ENCODE measurements at regions of chr7 and their contacts with region 1.

Region 1: DNA sequence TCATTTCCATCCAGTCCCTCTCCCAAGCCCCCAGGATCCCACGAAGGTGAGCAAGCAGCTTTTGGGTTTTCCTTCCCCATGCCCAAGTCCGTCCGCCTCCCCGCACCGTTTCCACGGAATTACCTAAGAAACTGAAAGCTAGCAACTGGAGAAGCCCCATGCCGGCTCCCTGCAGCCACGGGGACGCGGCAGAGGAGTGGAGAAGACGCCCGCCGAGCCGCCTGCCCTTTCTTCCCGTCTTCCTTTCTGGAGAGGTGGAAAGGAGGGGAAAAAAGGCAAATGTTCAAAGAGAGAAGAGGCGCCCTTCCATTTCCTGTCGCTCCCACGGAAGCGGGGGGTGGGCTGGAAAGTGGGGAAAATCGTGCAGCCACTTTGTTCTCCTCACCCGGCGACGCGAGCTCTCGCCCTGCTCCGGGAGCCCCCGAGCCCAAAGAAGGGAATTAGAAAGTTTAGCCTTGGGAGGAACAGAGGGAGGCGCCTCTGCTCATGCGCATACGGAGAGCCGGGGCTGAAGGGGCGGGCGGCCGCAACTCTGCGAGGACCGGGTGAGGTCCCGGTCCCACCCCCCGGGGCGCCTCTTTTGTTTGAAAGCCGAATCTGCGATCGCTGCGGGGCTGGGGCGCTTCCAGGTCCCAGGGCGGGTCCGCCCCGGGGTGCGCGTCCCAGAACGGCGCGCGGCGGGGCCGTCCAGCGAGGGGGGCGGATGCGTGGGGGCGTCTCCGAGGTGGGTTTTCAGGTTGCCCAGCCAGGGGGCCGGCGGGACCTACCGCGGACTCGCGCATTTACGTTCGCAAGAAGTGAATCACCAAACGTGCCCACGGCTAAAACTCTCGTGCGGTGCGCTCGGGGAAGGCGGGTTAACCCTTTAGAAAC is at the start of gene LAMB1:
- DNase-seq: peak; percentile 73
- ATAC-seq: peak; percentile 76
- H3K4me3 ChIP-seq: peak within 1 kb of the TSS; percentile 75 to 93 (median 85)
- H3K27ac ChIP-seq: peak within 1 kb of the TSS; percentile 68
- H3K4me1 ChIP-seq: peaks cover 87% of the 10 kb centered on the region
- H3K27me3 ChIP-seq: no peaks in the 10 kb centered on the region
- CTCF ChIP-seq: no peak; the same call in 1 of the 2 replicates
- EP300 ChIP-seq: no peak
- POLR2A ChIP-seq: peak; percentile 62 to 72
- RAD21 ChIP-seq: no peak
- total RNA-seq, gene LAMB1: 56.4 and 109 TPM in 2 replicates

Region 2: DNA sequence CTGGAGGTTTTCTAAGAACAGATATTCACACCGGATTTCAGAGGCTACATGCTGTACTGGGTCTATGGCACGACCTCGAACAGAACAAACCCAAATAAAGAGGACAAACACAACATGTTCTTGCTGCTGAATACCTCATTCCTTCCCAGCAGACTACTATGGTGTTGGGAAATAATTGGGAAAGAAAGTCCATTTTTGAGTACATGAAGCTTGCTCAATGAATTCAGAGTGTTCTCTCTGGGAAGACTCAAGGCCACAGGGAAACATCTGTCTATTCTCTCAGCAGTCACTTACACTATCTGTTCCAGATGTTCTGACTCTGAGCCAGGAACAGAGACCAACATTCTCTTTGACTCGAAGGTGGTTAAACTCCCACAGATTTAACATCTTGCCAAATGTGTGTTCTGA is 30.9 kb before region 1 on chr7:
- CTCF ChIA-PET with region 1: no interaction called
- POLR2A ChIA-PET with region 1: interaction called, 15 read pairs
- in situ Hi-C with region 1: no loop called
- intact Hi-C with region 1: loop called (anchors 1 kb)
- DNase-seq: peak; percentile 91
- ATAC-seq: peak; percentile 77
- H3K4me3 ChIP-seq: no peak overlapping the region
- H3K27ac ChIP-seq: peak overlapping the region; percentile 61
- H3K4me1 ChIP-seq: peaks cover 48% of the 10 kb centered on the region
- H3K27me3 ChIP-seq: no peaks in the 10 kb centered on the region
- CTCF ChIP-seq: no peak
- EP300 ChIP-seq: peak in 1 of 2 experiments; percentile 87; a peak in 2 of 4 replicates
- POLR2A ChIP-seq: no peak
- RAD21 ChIP-seq: no peak

Measured in HepG2 (cell line).